A673 (cell line): ENCODE measurements at regions of chr17 and their contacts with region 1.

Region 1: GRCh38 chr17:46738544-46738943 is 79.9 kb downstream of the WNT3 start:
- DNase-seq: no peak
- H3K4me3 ChIP-seq: no peak overlapping the region
- H3K27ac ChIP-seq: no peak overlapping the region
- H3K4me1 ChIP-seq: peaks cover 5% of the 10 kb centered on the region
- H3K27me3 ChIP-seq: no peaks in the 10 kb centered on the region
- CTCF ChIP-seq: no peak

Region 2: GRCh38 chr17:46764709-46765401 is 26.3 kb after region 1 on chr17:
- CTCF ChIA-PET with region 1: no interaction called
- POLR2A ChIA-PET with region 1: interaction called, 15 read pairs
- intact Hi-C with region 1: no loop called
- DNase-seq: no peak
- H3K4me3 ChIP-seq: no peak overlapping the region
- H3K27ac ChIP-seq: no peak overlapping the region
- H3K4me1 ChIP-seq: no peaks in the 10 kb centered on the region
- H3K27me3 ChIP-seq: no peaks in the 10 kb centered on the region
- CTCF ChIP-seq: no peak